Gastrocnemius medialis (tissue), 4 donors: ENCODE measurements at regions of chr11 and their contacts with region 1.

Region 1: GRCh38 chr11:25562417-25562816 is 769.5 kb upstream of the ANO3 start:
- DNase-seq: no peak
- ATAC-seq: no peak
- H3K4me3 ChIP-seq: no peak overlapping the region
- H3K27ac ChIP-seq: no peak overlapping the region
- H3K4me1 ChIP-seq: no peaks in the 10 kb centered on the region
- H3K27me3 ChIP-seq: no peaks in the 10 kb centered on the region
- CTCF ChIP-seq: no peak
- POLR2A ChIP-seq: no peak

Region 2: DNA sequence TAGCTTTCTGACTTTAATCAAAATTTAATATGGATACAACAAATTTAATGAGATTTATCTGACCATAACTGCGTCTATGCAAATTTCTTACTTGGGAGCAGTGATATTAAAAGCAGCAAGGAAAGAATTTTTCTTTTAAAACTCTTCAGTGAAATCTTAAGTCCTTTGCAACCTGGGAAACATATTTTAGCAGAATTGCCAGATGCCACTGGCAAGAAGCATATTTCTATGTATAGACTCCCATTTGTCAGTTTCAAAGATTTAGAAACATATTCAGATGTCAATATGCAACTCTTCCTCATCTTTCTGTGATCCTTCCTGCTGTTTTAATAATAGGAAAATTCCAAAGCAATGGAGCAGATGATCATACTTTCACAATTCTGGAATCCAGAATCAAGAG is 154.3 kb before region 1 on chr11:
- in situ Hi-C with region 1: no loop called
- intact Hi-C with region 1: no loop called
- DNase-seq: no peak
- ATAC-seq: no peak
- H3K4me3 ChIP-seq: no peak overlapping the region
- H3K27ac ChIP-seq: no peak overlapping the region
- H3K4me1 ChIP-seq: no peaks in the 10 kb centered on the region
- H3K27me3 ChIP-seq: no peaks in the 10 kb centered on the region
- CTCF ChIP-seq: no peak
- POLR2A ChIP-seq: no peak

Region 3: DNA sequence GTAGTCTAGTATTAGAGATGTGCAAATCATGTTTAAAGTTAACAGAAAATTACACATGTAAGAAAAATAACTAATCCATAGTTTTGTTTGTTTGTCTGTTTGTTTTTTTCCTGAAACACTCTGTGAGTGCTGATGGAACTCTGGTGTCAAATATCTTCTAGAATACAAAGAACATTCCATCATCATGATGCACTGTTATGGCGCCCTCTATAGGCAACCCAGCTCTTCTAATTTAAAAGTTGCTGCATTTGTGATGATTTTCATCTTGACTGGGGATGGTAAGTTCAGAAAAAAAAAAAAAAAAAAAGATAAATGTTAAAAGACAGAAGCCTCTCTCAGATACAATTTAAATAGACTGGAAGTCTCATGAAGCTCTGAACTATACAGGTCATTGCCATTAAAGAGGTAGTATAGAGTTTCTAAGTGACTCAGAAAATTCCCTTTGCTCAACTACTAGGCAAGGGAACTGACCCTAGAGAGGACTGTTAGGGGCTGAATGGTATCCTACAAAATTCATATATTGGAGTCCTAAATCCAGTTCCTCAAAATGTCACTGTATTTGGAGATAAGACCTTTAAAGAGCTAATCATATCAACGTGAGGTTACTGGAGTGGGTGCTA is 172.3 kb after region 1 on chr11:
- in situ Hi-C with region 1: loop called in 1 of 4 experiments (anchors 5 kb)
- intact Hi-C with region 1: no loop called
- DNase-seq: no peak
- ATAC-seq: no peak
- H3K4me3 ChIP-seq: no peak overlapping the region
- H3K27ac ChIP-seq: no peak overlapping the region
- H3K4me1 ChIP-seq: no peaks in the 10 kb centered on the region
- H3K27me3 ChIP-seq: no peaks in the 10 kb centered on the region
- CTCF ChIP-seq: no peak
- POLR2A ChIP-seq: no peak

Region 4: DNA sequence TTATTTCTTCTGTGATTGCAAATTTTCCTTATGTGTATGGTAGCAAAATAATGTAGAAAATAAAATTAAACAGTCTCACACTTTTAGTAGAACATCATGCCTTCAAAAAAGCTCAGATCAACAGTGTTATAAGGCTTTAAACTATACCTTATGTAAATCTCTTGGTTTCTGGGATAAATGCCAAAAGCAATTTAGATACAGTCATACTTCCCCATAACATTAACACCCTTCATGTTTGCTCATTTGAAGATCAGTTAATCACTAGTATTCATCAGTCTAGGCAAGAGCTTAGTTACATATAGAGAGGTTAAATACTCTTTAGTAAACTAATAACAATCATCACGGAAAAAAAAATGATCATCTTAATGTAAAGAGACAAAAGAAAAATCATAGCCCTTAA is 347.7 kb after region 1 on chr11:
- in situ Hi-C with region 1: no loop called
- intact Hi-C with region 1: no loop called
- DNase-seq: no peak
- ATAC-seq: no peak
- H3K4me3 ChIP-seq: no peak overlapping the region
- H3K27ac ChIP-seq: no peak overlapping the region
- H3K4me1 ChIP-seq: no peaks in the 10 kb centered on the region
- H3K27me3 ChIP-seq: no peaks in the 10 kb centered on the region
- CTCF ChIP-seq: no peak
- POLR2A ChIP-seq: no peak